Dendritic cell treated with granulocyte-macrophage colony-stimulating factor and Interleukin-4, amounts not matched to agents 40 ng/mL and 50 ng/mL, for 4 days (primary cell): ENCODE measurements at regions of chr6 and their contacts with region 1.

Region 1: DNA sequence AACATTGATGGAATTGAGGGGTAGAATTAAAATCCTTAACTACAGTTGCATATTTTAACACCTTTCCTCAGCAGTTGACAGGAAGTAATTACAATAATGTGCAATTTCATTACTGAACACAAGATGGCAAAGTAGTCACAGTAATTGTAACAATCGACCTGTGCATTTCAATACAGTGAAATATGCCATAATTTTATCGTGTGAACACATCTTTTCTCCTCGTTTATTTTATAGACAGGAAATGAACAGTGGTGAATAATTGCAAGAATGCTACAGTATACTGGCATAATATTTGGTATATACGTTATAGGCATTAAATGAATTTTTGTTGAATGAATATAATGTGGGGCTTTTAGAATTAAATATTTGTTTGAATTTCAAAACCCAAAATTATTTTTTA is 25.0 kb downstream of the CYB5R4 start:
- H3K4me3 Mint-ChIP-seq: no peak overlapping the region
- H3K27ac Mint-ChIP-seq: no peak overlapping the region
- H3K4me1 Mint-ChIP-seq: peaks cover 28% of the 10 kb centered on the region
- H3K27me3 Mint-ChIP-seq: no peaks in the 10 kb centered on the region

Region 2: DNA sequence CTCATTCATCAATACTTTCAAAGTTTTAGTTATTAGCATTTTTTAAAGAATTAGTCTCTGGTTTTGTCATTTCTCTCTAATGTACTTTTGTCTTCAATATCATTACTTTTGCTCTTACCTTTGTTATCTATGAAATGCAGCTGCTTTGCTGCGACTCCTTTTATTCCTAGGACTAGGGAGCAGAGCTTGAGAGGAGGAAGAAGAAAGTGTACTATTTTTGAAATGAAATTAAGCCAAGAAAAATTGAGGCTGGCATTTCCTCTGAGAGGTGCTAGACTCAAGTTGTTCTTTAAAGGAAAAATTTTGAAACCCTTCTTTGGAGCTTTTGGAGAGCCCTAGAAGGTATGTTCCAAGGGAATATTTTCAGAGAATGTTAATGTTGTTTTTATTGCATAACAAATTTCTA is 100.8 kb after region 1 on chr6:
- intact Hi-C with region 1: no loop called
- H3K4me3 Mint-ChIP-seq: no peak overlapping the region
- H3K27ac Mint-ChIP-seq: no peak overlapping the region
- H3K4me1 Mint-ChIP-seq: no peaks in the 10 kb centered on the region
- H3K27me3 Mint-ChIP-seq: no peaks in the 10 kb centered on the region

Region 3: GRCh38 chr6:84220809-84221409 is 336.4 kb after region 1 on chr6:
- intact Hi-C with region 1: loop called (anchors 1 kb)
- H3K4me3 Mint-ChIP-seq: no peak overlapping the region
- H3K27ac Mint-ChIP-seq: no peak overlapping the region
- H3K4me1 Mint-ChIP-seq: peaks cover 17% of the 10 kb centered on the region
- H3K27me3 Mint-ChIP-seq: no peaks in the 10 kb centered on the region

Region 4: GRCh38 chr6:84227434-84228197 is 343.1 kb after region 1 on chr6 and contains the start of gene CEP162:
- intact Hi-C with region 1: loop called (anchors 2 kb)
- H3K4me3 Mint-ChIP-seq: peak within 1 kb of the TSS; percentile 99
- H3K27ac Mint-ChIP-seq: peak within 1 kb of the TSS; percentile 86
- H3K4me1 Mint-ChIP-seq: peaks cover 21% of the 10 kb centered on the region
- H3K27me3 Mint-ChIP-seq: peaks cover 20% of the 10 kb centered on the region